ENCODE measurements at regions of chr4 and their contacts with region 1.

Region 1: DNA sequence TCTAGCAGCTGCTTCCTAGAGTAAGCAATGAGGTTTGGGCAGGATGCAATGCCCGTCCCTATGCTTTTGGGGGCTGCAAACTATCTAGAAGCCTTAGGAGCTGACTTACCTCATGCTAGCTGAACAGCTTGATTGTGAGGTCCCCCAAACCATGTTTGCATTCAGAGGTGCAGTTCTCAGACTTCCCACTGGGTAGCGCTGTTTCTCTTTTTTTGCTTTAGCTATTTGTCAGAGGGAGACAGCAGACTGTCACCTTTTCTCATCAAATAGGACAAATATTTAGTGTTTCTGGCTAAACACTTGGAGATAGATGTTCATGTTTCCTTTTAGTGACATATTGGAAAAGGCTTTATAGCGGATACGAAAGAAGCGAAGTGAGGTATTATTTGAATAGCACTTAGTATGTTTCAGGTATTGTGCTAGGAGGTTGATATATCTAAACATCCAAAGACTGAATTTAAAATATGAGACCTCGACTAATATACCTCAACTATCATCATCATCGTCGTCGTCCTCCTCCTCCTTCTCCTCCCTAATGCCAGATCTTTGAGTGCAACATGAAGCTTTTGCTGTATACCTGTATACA is 18.7 kb upstream of the TMEM192 start:
- DNase-seq: peak; percentile 58

Region 2: GRCh38 chr4:165112368-165113139 is 18.8 kb before region 1 on chr4 and contains the start of gene TMEM192:
- CTCF ChIA-PET with region 1: interaction called, 17 read pairs
- POLR2A ChIA-PET with region 1: interaction called, 4 read pairs
- DNase-seq: peak; percentile 94

Measured in HEK293T (cell line).